ENCODE measurements at regions of chr11 and their contacts with region 1.

Region 1: GRCh38 chr11:9858822-9859221 is 194.9 kb downstream of the SWAP70 start:
- DNase-seq: no peak
- H3K4me3 ChIP-seq: no peak overlapping the region
- H3K27ac ChIP-seq: no peak overlapping the region
- H3K4me1 ChIP-seq: no peaks in the 10 kb centered on the region
- H3K27me3 ChIP-seq: no peaks in the 10 kb centered on the region
- CTCF ChIP-seq: no peak
- EP300 ChIP-seq: no peak
- POLR2A ChIP-seq: no peak

Region 2: DNA sequence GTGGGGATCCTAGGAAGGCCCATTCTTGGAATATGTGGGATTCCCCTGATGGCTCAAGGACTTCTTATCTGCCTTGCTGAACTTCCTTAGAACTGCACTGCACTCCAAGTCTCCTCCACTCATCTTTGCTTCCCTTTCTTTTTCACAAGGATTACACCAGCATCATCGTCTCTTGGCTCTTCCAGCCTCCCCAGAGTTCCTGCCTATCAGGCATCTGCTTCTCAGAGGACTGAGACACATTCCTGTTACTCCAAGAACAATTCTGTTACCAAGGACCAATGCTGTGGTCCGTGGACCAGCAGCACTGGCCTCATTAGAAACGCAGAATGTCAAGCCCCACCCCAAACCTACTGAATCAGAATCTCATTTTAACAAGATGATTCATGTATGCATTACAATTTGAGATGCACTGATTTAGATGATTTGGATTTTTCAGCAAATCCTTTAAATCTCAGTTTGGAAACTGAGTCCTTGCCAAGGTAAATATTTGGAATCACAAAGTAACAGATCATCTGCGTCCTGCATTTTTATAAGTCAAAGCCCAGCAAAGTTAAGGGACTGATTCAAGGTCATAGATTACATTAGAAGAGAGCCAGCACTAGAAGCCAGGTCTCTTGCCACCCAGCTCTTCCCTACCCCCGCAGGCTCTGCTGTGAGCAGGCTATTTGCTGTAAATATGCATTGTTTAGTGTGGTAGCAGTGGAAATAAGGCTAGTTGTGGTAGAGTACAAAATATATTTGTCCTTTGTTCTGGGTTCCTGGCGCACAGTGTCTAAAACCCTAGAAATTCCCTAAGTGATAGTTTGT is 84.0 kb before region 1 on chr11:
- intact Hi-C with region 1: loop called in 1 of 4 experiments (anchors 10 kb)
- DNase-seq: no peak
- H3K4me3 ChIP-seq: no peak overlapping the region
- H3K27ac ChIP-seq: peak overlapping the region in 1 of 2 donors; percentile 27
- H3K4me1 ChIP-seq: peaks cover 5% of the 10 kb centered on the region
- H3K27me3 ChIP-seq: no peaks in the 10 kb centered on the region
- CTCF ChIP-seq: no peak
- EP300 ChIP-seq: no peak
- POLR2A ChIP-seq: no peak

Region 3: GRCh38 chr11:9895006-9895405 is 36.2 kb after region 1 on chr11:
- intact Hi-C with region 1: no loop called
- DNase-seq: no peak
- H3K4me3 ChIP-seq: no peak overlapping the region
- H3K27ac ChIP-seq: no peak overlapping the region
- H3K4me1 ChIP-seq: no peaks in the 10 kb centered on the region
- H3K27me3 ChIP-seq: no peaks in the 10 kb centered on the region
- CTCF ChIP-seq: no peak
- EP300 ChIP-seq: no peak
- POLR2A ChIP-seq: no peak

Measured in ovary (tissue), 10 donors.